ENCODE measurements at regions of chr10 and their contacts with region 1.

Region 1: DNA sequence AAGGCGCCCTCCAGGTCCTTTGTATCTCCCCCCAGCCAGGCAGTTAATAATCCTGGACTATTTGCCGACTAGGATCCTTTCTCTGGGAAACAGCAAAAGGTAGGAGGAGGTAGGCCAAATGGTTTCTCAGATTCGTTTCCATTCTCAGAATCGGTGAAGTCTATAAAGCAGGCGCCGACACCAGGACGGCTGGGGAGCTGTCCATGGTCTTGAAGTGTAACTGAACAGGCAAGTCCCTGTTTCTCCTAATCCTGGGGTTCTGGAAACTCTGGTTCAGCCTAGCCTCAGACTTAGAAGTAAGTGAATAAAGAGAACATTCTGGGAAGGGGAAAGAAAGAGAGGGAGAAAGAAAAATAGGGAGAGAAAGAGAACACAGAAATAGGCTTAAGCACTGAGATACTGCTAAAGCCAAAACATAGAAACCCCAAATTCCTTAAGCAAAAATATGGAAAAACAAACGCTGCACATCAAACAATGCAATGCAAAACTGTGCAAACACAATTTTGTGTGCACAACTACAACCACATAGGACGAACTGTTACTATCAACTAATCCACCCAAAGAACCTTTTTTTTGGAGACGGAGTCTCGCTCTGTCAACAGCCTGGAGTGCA is 11.1 kb upstream of the INA start:
- DNase-seq: peak in 1 of 2 donors; percentile 64
- H3K4me3 ChIP-seq: no peak overlapping the region
- H3K27ac ChIP-seq: no peak overlapping the region
- H3K4me1 ChIP-seq: no peaks in the 10 kb centered on the region
- H3K27me3 ChIP-seq: peaks cover 0 to 12% of the 10 kb centered on the region in 2 donors
- CTCF ChIP-seq: no peak
- POLR2A ChIP-seq: no peak

Region 2: DNA sequence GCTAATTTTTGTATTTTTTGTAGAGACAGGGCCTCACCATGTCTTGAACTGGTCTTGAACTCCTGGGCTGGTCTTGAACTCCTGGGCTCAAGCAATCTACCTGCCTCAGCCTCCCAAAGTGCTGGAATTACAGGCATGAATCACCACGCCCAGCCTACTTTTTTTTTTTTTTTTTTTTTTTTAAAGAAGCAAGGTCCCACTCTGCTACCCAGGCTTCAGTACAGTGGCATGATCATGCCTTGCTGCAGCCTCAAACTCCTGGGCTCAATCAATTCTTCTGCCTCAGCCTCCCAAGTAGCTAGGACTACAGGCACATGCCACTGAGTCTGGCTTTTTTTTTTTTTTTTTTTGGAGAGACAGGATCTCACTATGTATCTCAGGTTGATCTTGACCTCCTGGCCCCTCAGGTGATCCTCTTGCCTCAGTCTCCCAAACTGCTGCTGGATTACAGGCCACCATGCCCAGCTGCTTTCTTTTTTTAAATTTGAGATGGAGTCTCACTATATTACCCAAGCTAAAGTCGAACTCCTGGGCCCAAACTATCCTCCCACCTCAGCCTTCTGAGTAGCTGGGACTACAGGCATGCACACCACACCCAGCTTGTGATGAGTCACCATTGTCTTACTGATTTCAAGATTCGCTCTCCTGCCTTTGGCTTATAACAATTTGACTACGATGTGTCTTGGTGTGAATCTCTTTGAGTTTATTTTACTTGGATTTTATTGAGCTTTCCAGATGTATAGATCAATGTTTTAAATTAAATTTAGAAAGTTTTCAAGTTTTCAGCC is 11.1 kb before region 1 on chr10:
- intact Hi-C with region 1: loop called (anchors 1 kb)
- DNase-seq: no peak
- H3K4me3 ChIP-seq: no peak overlapping the region
- H3K27ac ChIP-seq: no peak overlapping the region
- H3K4me1 ChIP-seq: no peaks in the 10 kb centered on the region
- H3K27me3 ChIP-seq: no peaks in the 10 kb centered on the region
- CTCF ChIP-seq: no peak
- POLR2A ChIP-seq: no peak

Region 3: DNA sequence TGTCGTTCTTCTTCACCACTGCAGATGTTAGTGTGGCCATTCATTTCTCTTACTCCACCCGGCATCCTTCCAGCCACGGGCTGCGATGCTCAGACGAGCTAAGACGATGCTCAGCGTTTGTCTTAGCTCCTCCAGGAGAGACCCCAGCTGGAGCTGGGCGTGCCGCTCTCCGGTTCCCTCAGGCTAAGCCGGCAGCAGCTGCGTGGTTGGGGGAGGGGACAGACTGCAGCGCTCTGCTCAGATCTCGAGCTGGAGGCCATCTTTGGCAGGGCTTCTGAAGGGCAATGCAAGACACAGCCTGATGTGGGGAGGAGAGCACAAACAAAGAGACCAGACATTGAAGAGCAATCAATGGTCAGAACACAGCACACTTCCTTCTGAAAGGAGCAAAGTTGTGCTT is 15.9 kb after region 1 on chr10:
- intact Hi-C with region 1: loop called (anchors 2 kb)
- DNase-seq: no peak
- H3K4me3 ChIP-seq: no peak overlapping the region
- H3K27ac ChIP-seq: no peak overlapping the region
- H3K4me1 ChIP-seq: peaks cover 0 to 7% of the 10 kb centered on the region in 2 donors
- H3K27me3 ChIP-seq: peaks cover 5 to 58% of the 10 kb centered on the region in 2 donors
- CTCF ChIP-seq: no peak
- POLR2A ChIP-seq: no peak

Region 4: GRCh38 chr10:103307594-103307993 is 41.8 kb after region 1 on chr10:
- intact Hi-C with region 1: no loop called
- DNase-seq: no peak
- H3K4me3 ChIP-seq: no peak overlapping the region
- H3K27ac ChIP-seq: no peak overlapping the region
- H3K4me1 ChIP-seq: no peaks in the 10 kb centered on the region
- H3K27me3 ChIP-seq: no peaks in the 10 kb centered on the region
- CTCF ChIP-seq: no peak
- POLR2A ChIP-seq: no peak